ENCODE measurements at regions of chr14 and their contacts with region 1.

Region 1: GRCh38 chr14:91493169-91493568 is 16.9 kb downstream of the PPP4R3A start:
- DNase-seq: peak in 1 of 3 donors; percentile 9
- H3K4me3 ChIP-seq: no peak overlapping the region
- H3K4me3 Mint-ChIP-seq: no peak overlapping the region
- H3K27ac ChIP-seq: no peak overlapping the region
- H3K27ac Mint-ChIP-seq: peak overlapping the region in 5 of 7 donors; percentile 18 to 83 (median 61)
- H3K4me1 ChIP-seq: peaks cover 44 to 52% of the 10 kb centered on the region in 2 donors
- H3K4me1 Mint-ChIP-seq: peaks cover 45% of the 10 kb centered on the region
- H3K27me3 ChIP-seq: no peaks in the 10 kb centered on the region
- H3K27me3 Mint-ChIP-seq: no peaks in the 10 kb centered on the region
- CTCF ChIP-seq: no peak

Region 2: DNA sequence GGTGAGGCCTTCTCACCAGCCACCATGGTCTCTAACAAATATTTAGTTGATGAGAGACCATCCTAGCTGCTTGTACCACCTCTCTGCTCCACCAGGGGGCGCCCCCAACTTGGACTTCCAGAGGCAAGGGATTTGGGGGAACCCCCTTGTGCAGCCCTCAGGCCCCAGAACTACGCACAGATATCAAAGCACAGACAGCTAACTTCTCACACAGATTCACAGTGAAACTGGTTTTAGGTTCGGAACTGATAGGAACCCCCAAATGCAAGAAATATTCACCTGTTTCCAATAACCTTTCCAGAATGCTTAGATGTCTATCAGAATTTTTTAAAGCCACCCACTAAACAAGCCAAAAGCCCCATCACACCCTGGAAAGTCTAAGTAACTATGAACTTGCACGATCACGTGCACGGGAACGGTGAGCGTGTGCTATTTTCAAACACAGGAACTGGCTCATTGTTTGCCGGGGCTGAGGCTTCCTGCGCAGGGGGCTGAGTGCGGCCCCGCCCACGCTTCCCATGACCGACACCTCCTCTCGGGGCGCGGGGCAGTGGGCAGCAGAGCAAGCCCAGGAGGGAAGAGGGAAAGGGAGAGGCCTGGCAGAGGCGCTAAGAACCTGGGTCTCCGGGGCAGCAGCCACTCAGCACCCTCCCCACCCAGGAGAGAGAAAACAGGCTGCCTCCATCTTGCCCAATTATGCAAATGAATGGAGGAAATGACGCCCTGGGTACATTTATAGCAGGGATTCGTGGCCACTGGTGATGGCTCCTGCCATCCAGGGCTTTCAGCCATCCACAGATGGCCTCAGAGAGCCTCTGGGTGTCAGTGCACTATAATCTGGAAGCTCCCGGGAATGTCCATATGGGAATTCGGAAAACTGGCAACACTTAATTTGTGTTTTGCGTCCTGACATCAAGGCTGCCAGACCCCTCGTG is 169.2 kb before region 1 on chr14:
- intact Hi-C with region 1: loop called in 1 of 2 experiments (anchors 10 kb)
- DNase-seq: peak; percentile 82 to 88 (median 86)
- H3K4me3 ChIP-seq: peak overlapping the region; percentile 39 to 73 (median 42)
- H3K4me3 Mint-ChIP-seq: peak overlapping the region; percentile 81 to 92
- H3K27ac ChIP-seq: peak overlapping the region; percentile 92 to 98
- H3K27ac Mint-ChIP-seq: peak overlapping the region; percentile 95 to 99 (median 99)
- H3K4me1 ChIP-seq: peaks cover 26 to 31% of the 10 kb centered on the region in 2 donors
- H3K4me1 Mint-ChIP-seq: peaks cover 44% of the 10 kb centered on the region
- H3K27me3 ChIP-seq: no peaks in the 10 kb centered on the region
- H3K27me3 Mint-ChIP-seq: peaks cover 0 to 1% (median 0%) of the 10 kb centered on the region in 3 donors
- CTCF ChIP-seq: peak; percentile 97

Region 3: GRCh38 chr14:91523972-91524371 is 30.8 kb after region 1 on chr14:
- intact Hi-C with region 1: no loop called
- DNase-seq: no peak
- H3K4me3 ChIP-seq: no peak overlapping the region
- H3K4me3 Mint-ChIP-seq: no peak overlapping the region
- H3K27ac ChIP-seq: no peak overlapping the region
- H3K27ac Mint-ChIP-seq: peak overlapping the region in 1 of 7 donors; percentile 3
- H3K4me1 ChIP-seq: peaks cover 17 to 21% of the 10 kb centered on the region in 2 donors
- H3K4me1 Mint-ChIP-seq: peaks cover 14% of the 10 kb centered on the region
- H3K27me3 ChIP-seq: no peaks in the 10 kb centered on the region
- H3K27me3 Mint-ChIP-seq: peaks cover 0 to 7% (median 1%) of the 10 kb centered on the region in 3 donors
- CTCF ChIP-seq: no peak

Measured in CD14-positive monocyte (primary cell).